PC-9 (cell line): ENCODE measurements at regions of chr2 and their contacts with region 1.

Region 1: DNA sequence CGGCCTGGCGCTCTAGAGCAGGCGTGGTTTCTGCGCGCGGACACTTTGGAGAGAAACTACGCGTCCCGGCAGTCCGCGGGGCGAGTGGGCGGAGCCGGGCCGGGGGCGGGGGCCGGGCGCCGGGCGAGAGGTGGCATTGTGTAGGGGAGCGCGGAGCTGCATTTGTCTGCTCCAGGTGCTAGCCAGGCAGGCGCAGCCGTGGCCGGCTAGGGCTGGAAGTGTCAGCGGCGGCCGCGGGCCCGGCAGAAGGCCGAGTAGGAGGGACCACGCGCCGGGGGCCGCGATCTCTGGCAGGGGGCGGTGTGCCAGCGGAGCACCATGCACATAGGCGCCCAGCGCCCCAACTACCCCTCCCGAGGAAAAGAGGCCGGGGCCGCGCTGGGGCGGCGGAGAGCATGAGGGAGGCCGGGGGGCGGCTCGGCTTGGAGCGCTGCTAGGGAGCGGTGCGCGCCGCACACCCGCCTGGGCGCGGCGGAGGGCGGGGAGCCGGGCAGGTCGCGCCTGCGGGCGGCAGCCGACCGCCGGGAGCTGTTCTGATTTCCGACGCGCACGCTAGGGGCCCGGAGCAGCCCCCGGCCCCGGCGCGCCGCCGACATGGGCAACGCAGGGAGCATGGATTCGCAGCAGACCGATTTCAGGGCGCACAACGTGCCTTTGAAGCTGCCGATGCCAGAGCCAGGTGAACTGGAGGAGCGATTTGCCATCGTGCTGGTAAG is at the start of gene FMNL2:
- DNase-seq: peak; percentile 69 to 88
- H3K4me3 ChIP-seq: peak within 1 kb of the TSS; percentile 94
- H3K27ac ChIP-seq: peak within 1 kb of the TSS; percentile 35
- H3K4me1 ChIP-seq: peaks cover 29% of the 10 kb centered on the region
- H3K27me3 ChIP-seq: no peaks in the 10 kb centered on the region
- CTCF ChIP-seq: no peak; the same call in 1 of the 2 replicates
- total RNA-seq, gene FMNL2: 29.0 and 33.6 TPM in 2 replicates

Region 2: GRCh38 chr2:152078662-152079061 is 256.5 kb before region 1 on chr2:
- CTCF ChIA-PET with region 1: no interaction called
- POLR2A ChIA-PET with region 1: no interaction called
- intact Hi-C with region 1: no loop called
- DNase-seq: no peak
- H3K4me3 ChIP-seq: no peak overlapping the region
- H3K27ac ChIP-seq: no peak overlapping the region
- H3K4me1 ChIP-seq: no peaks in the 10 kb centered on the region
- H3K27me3 ChIP-seq: no peaks in the 10 kb centered on the region
- CTCF ChIP-seq: no peak

Region 3: GRCh38 chr2:152189622-152190495 is 145.3 kb before region 1 on chr2:
- CTCF ChIA-PET with region 1: no interaction called
- POLR2A ChIA-PET with region 1: no interaction called
- intact Hi-C with region 1: loop called (anchors 1 kb)
- DNase-seq: peak; percentile 39 to 53
- H3K4me3 ChIP-seq: no peak overlapping the region
- H3K27ac ChIP-seq: no peak overlapping the region
- H3K4me1 ChIP-seq: no peaks in the 10 kb centered on the region
- H3K27me3 ChIP-seq: no peaks in the 10 kb centered on the region
- CTCF ChIP-seq: peak; percentile 85

Region 4: GRCh38 chr2:152466980-152467676 is 132.0 kb after region 1 on chr2:
- CTCF ChIA-PET with region 1: interaction called, 5 read pairs
- POLR2A ChIA-PET with region 1: no interaction called
- intact Hi-C with region 1: loop called (anchors 5 kb)
- DNase-seq: peak in 1 of 2 experiments; percentile 17
- H3K4me3 ChIP-seq: no peak overlapping the region
- H3K27ac ChIP-seq: peak overlapping the region; percentile 47; the same call in 1 of the 2 replicates
- H3K4me1 ChIP-seq: peaks cover 73% of the 10 kb centered on the region
- H3K27me3 ChIP-seq: no peaks in the 10 kb centered on the region
- CTCF ChIP-seq: no peak

Region 5: DNA sequence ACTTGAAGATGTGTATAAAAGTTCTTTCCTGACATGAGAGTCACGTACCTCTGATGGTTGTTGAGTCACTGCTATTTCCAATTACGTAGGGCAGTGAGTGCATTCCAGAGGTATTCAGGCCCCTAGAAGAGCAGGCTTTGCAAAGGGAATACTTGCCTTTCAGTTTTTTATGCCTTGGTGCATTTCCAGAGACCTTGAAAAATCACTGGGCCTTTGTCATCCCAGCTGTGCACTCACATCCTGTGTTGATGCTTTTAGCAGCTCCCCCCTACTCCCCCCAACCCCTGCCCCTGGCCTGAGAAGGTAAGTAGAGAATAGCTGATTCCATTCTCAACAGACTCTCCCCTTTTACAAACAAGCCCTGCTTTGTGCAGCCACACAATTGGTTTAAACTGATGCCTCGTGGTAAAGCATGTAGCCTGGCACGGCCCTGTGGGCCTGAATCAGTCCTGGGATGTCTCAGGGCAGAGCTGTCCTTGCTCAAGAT is 207.9 kb after region 1 on chr2:
- CTCF ChIA-PET with region 1: no interaction called
- POLR2A ChIA-PET with region 1: interaction called, 4 read pairs
- intact Hi-C with region 1: loop called (anchors 5 kb)
- DNase-seq: peak; percentile 35 to 90
- H3K4me3 ChIP-seq: peak overlapping the region; percentile 10; the same call in 1 of the 2 replicates
- H3K27ac ChIP-seq: peak overlapping the region; percentile 78
- H3K4me1 ChIP-seq: peaks cover 37% of the 10 kb centered on the region
- H3K27me3 ChIP-seq: no peaks in the 10 kb centered on the region
- CTCF ChIP-seq: no peak

Region 6: GRCh38 chr2:152627351-152627957 is 292.3 kb after region 1 on chr2:
- CTCF ChIA-PET with region 1: no interaction called
- POLR2A ChIA-PET with region 1: no interaction called
- intact Hi-C with region 1: loop called (anchors 5 kb)
- DNase-seq: no peak
- H3K4me3 ChIP-seq: no peak overlapping the region
- H3K27ac ChIP-seq: no peak overlapping the region
- H3K4me1 ChIP-seq: no peaks in the 10 kb centered on the region
- H3K27me3 ChIP-seq: no peaks in the 10 kb centered on the region
- CTCF ChIP-seq: peak; percentile 74